ENCODE measurements at regions of chr6 and their contacts with region 1.

Region 1: DNA sequence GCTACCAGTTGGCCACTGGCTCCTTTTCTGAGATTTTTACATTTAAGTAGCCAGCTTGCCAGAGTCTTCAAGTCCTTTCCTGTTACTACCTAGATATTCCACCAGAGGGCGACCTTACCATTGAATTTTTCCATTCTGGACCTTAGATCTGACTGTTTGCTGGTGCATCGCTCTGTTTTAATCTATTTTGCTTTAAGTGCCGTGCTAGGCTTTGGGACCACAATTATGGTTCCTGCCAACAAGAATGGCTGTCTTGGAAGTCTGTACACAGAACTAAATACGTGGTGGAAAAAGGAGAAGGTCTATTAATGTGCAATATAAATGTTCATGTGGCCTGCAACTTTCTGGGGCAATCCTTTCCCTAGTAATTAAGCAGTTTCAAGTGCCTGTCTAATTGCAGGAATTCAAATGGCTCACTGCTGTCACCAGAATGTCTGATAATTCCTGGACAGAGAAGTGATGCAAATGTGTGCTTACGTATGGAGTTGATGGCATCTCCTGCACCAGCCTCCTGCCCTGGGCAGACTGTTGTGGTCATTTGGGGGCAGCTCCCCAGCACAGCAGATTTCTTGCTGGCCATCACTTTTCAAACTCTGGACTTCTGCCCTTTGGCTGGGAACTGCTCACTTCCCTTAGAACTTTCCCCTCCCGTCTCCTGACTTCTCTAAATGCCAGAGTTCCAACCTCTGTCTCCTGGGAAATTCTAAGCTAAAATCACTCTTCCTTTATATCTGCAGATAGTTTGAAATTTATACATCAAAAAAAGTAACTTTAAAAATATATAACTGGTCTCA is 5.6 kb upstream of the HLA-DOA start:
- DNase-seq: peak; percentile 78
- ATAC-seq: peak; percentile 90
- H3K4me3 ChIP-seq: no peak overlapping the region
- H3K27ac ChIP-seq: no peak overlapping the region
- H3K4me1 ChIP-seq: peaks cover 0 to 3% of the 10 kb centered on the region in 2 experiments; a peak in 1 of 4 replicates
- H3K27me3 ChIP-seq: peaks cover 8% of the 10 kb centered on the region; the same call in 1 of the 2 replicates
- CTCF ChIP-seq: peak; percentile 55 to 91 (median 71)
- POLR2A ChIP-seq: no peak
- RAD21 ChIP-seq: peak; percentile 82

Region 2: GRCh38 chr6:32947552-32948465 is 67.2 kb before region 1 on chr6:
- CTCF ChIA-PET with region 1: no interaction called
- POLR2A ChIA-PET with region 1: no interaction called
- RAD21 ChIA-PET with region 1: no interaction called
- intact Hi-C with region 1: no loop called
- DNase-seq: peak; percentile 48
- ATAC-seq: peak; percentile 94
- H3K4me3 ChIP-seq: no peak overlapping the region
- H3K27ac ChIP-seq: no peak overlapping the region
- H3K4me1 ChIP-seq: peaks cover 0 to 4% of the 10 kb centered on the region in 2 experiments; a peak in 2 of 4 replicates
- H3K27me3 ChIP-seq: no peaks in the 10 kb centered on the region
- CTCF ChIP-seq: peak; percentile 64 to 78 (median 70)
- POLR2A ChIP-seq: no peak
- RAD21 ChIP-seq: peak; percentile 89

Region 3: GRCh38 chr6:33082702-33083101 is 67.7 kb after region 1 on chr6:
- CTCF ChIA-PET with region 1: interaction called, 4 read pairs
- POLR2A ChIA-PET with region 1: no interaction called
- RAD21 ChIA-PET with region 1: no interaction called
- intact Hi-C with region 1: loop called (anchors 1 kb)
- DNase-seq: peak; percentile 24
- ATAC-seq: peak; percentile 89
- H3K4me3 ChIP-seq: no peak overlapping the region
- H3K27ac ChIP-seq: no peak overlapping the region
- H3K4me1 ChIP-seq: no peaks in the 10 kb centered on the region
- H3K27me3 ChIP-seq: no peaks in the 10 kb centered on the region; the same call in 1 of the 2 replicates
- CTCF ChIP-seq: peak; percentile 38 to 68 (median 65); a peak in 5 of 6 replicates
- POLR2A ChIP-seq: no peak
- RAD21 ChIP-seq: peak; percentile 55

Region 4: DNA sequence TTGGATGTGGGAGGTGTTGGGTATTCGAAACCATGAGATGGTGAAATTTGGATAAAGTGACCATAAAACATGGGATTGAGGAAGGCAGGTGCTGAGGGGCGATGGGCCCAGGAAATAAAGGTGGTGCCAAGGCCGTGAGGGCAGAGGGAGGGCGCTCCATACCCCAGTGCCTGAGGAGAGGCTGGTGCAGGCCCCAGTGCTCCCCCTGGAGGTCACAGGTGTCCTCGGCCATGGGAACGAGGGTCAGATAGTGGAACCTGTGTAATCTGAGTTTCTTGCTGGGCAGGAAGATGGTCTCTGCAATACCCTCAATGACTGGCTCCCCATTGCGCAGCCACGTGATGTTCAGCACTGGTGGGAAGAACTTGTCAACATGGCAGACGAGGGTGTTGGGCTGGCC is 76.9 kb after region 1 on chr6:
- CTCF ChIA-PET with region 1: interaction called, 4 read pairs
- POLR2A ChIA-PET with region 1: no interaction called
- RAD21 ChIA-PET with region 1: no interaction called
- intact Hi-C with region 1: loop called (anchors 2 kb)
- DNase-seq: peak; percentile 8
- ATAC-seq: peak; percentile 94
- H3K4me3 ChIP-seq: no peak overlapping the region
- H3K27ac ChIP-seq: no peak overlapping the region
- H3K4me1 ChIP-seq: peaks cover 0 to 14% of the 10 kb centered on the region in 2 experiments; a peak in 2 of 4 replicates
- H3K27me3 ChIP-seq: no peaks in the 10 kb centered on the region; the same call in 1 of the 2 replicates
- CTCF ChIP-seq: peak; percentile 78 to 93 (median 89)
- POLR2A ChIP-seq: no peak
- RAD21 ChIP-seq: peak; percentile 51

Region 5: DNA sequence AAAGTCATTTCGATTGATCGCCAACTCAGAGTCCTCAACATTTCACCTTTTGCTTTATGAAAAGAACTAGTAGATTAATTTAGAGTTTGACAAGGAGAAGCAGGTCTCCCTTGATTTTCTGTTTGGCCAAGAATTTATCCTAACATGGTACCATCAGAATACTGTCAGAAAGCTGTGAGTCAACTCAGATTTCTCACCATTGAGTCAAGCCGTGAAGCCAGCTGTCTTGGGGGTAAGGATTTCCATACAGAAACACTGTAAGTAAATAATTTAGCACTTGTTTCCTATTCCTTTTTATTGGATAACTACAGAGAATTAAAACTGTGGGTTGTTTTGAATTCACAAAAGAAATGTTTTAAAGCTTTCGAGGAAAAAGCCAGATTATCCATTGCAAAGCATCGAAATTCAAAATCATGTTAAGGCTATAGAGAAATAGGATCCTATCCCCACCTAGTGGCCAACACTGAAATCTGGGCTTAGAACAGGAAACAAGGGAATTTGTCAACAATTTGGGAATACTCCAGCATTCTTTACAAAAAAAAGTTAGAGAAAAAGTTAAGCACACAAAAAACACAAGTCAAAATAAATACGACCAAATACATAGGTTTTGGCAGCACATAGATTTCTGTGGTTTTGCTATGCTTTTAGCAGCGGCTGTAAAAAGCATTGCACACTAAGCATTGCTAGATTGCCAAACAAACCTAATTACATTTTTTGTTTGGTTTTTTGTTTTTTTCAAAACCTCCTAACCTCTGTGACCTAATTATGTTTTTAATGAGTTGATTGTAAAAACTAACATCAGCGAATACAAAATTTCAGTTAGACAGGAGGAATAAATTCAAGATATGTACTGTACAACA is 133.0 kb after region 1 on chr6:
- CTCF ChIA-PET with region 1: interaction called, 6 read pairs
- POLR2A ChIA-PET with region 1: no interaction called
- RAD21 ChIA-PET with region 1: no interaction called
- intact Hi-C with region 1: loop called (anchors 1 kb)
- DNase-seq: peak; percentile 54
- ATAC-seq: peak; percentile 75
- H3K4me3 ChIP-seq: no peak overlapping the region
- H3K27ac ChIP-seq: no peak overlapping the region
- H3K4me1 ChIP-seq: 0 out of 4 replicates have a peak, but pooled peaks cover 0 to 6% of the 10 kb centered on the region in 2 experiments
- H3K27me3 ChIP-seq: no peaks in the 10 kb centered on the region
- CTCF ChIP-seq: peak; percentile 78 to 85 (median 79)
- POLR2A ChIP-seq: no peak
- RAD21 ChIP-seq: peak; percentile 71

Region 6: DNA sequence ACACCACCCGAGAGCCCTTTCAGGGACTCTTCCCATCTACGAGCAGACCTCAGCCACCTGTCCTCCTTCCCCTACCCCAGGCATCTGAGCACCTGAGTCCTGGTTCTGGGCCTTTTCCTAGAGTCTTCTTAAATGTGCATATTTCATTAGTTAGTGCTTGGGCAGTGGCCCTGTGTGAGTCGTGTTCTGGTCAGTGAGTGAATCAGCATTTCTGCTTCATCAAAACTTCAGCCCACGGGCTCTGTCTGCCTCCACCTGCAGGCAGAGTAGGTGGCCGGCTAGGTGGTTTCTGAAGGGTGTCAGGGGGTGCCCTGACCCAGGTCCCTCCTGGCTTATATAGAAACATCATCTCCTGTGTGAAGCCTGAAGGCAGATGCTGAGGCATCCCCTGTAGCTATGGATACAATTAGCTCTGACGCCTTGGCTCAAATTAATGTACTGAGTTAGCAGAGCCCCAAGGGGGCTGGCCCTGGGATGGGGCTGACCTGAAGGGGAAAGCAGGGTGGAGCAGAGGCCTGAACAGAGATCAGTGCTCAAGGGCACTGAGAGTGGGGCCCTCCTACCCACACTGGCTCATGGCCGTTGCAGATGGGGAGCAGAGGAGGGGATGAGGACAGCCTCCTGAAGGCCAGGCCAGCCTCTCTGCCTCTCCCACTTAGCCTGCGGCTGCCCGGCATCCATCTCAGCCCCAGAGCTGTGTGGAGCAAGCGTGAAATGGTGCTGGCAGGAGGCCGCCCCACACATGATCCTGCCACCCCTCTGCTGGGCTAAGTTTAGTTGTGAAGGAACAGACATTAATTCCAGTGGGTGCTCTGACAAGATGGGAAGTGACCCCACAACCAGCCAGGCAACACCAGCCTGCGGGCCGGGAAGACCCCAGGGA is 718.0 kb after region 1 on chr6:
- CTCF ChIA-PET with region 1: no interaction called
- POLR2A ChIA-PET with region 1: no interaction called
- RAD21 ChIA-PET with region 1: no interaction called
- intact Hi-C with region 1: no loop called
- DNase-seq: no peak
- ATAC-seq: peak; percentile 23; the same call in 1 of the 2 replicates
- H3K4me3 ChIP-seq: no peak overlapping the region
- H3K27ac ChIP-seq: no peak overlapping the region
- H3K4me1 ChIP-seq: peaks cover 0 to 10% of the 10 kb centered on the region in 2 experiments; a peak in 2 of 4 replicates
- H3K27me3 ChIP-seq: no peaks in the 10 kb centered on the region
- CTCF ChIP-seq: no peak
- POLR2A ChIP-seq: no peak
- RAD21 ChIP-seq: no peak